ENCODE measurements at regions of chr10 and their contacts with region 1.

Region 1: DNA sequence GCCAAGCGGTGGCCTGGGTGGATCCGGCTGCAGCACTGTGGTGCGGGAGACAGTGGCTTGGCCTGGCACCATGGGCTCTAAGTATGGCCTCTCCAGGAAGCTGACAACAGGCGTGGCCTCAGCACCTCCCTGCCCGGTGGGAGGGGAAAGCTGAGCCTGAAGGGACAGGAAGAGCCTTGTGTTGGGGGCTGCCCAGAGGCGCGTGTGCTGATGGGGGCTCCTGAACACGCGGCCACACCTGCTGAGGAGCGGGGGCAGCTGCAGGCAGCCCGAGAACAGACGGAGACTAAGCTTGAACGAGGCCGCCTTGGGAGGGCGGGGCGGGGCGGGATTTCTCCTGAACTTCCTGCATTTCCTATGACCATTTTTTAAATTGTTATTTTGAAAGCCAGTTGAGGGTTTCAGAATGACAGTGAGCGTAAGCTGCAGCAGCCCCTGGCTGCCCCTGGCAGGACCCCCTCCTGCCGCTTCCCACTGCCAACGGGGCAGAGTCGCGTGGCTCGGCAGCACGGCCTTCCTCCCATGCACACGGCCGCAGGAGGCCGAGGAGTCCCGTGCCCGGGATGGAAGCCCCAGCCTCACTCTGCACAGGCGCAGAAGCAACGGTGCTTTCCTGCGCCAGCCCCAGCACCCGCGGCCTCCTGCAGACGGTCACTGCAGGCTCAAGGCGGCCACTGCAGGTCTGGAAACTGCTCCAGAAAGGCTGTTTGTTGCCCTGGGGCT is 43.2 kb downstream of the DPYSL4 start:
- DNase-seq: peak in 1 of 2 donors; percentile 43
- ATAC-seq: peak in 7 of 8 donors; percentile 32 to 77 (median 60)
- H3K4me3 ChIP-seq: peak overlapping the region in 9 of 10 donors; percentile 16 to 51 (median 41)
- H3K27ac ChIP-seq: peak overlapping the region in 7 of 10 donors; percentile 9 to 86 (median 45)
- H3K4me1 ChIP-seq: peaks cover 0 to 52% (median 0%) of the 10 kb centered on the region in 9 donors
- H3K27me3 ChIP-seq: no peaks in the 10 kb centered on the region
- CTCF ChIP-seq: no peak

Region 2: GRCh38 chr10:132452631-132453469 is 222.9 kb after region 1 on chr10:
- intact Hi-C with region 1: loop called in 3 of 10 experiments (anchors 5 to 10 kb)
- DNase-seq: peak; percentile 79 to 88
- ATAC-seq: peak; percentile 76 to 90 (median 85)
- H3K4me3 ChIP-seq: peak overlapping the region in 8 of 10 donors; percentile 10 to 37 (median 22)
- H3K27ac ChIP-seq: peak overlapping the region in 2 of 10 donors; percentile 15 to 48
- H3K4me1 ChIP-seq: peaks cover 7 to 22% (median 18%) of the 10 kb centered on the region in 9 donors
- H3K27me3 ChIP-seq: peaks cover 0 to 8% (median 3%) of the 10 kb centered on the region in 7 donors
- CTCF ChIP-seq: peak; percentile 90 to 98 (median 97)

Region 3: GRCh38 chr10:132536971-132537712 is 307.1 kb after region 1 on chr10:
- intact Hi-C with region 1: no loop called
- DNase-seq: peak; percentile 100
- ATAC-seq: peak; percentile 94 to 97 (median 95)
- H3K4me3 ChIP-seq: peak overlapping the region; percentile 52 to 86 (median 72)
- H3K27ac ChIP-seq: peak overlapping the region; percentile 75 to 97 (median 90)
- H3K4me1 ChIP-seq: peaks cover 24 to 56% (median 54%) of the 10 kb centered on the region in 9 donors
- H3K27me3 ChIP-seq: no peaks in the 10 kb centered on the region
- CTCF ChIP-seq: peak; percentile 22 to 65 (median 44)